CD8-positive, alpha-beta T cell (primary cell): ENCODE measurements at regions of chr4 and their contacts with region 1.

Region 1: DNA sequence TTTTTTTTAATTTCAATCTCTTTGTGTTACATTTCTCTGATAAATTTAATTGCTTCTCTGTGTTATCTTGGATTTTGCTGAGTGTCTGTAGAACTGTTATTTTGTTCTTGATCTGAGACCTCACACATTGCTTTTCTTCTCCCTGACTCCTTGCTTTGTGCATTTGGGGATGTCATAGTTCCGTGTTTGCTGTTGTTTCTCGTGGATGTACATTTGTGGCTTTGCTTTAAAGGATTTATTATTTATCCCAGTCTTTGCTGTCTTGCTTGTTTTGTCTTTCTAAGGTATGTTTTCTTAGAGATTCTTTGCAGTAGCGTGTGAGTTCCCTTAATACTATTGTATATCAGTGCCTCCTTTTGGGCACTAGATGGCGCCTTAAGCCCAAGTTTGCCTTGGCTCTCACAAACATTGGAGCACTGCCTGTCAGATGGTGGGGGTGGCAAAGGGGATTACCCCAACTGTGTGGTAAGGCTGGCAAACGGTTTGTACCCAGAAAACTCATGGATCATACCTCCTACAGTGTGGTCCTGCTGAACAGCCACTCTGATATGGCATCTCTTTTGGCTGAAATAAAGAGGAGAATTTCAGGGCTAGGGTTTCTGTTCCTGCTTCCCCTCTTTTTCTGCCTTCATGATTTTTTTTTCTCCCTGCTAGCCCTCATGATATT is 96.4 kb downstream of the PGRMC2 start:
- DNase-seq: peak; percentile 21 to 85 (median 69)
- ATAC-seq: peak; percentile 100
- H3K4me3 ChIP-seq: no peak overlapping the region
- H3K4me3 Mint-ChIP-seq: no peak overlapping the region
- H3K27ac ChIP-seq: no peak overlapping the region
- H3K27ac Mint-ChIP-seq: no peak overlapping the region
- H3K4me1 ChIP-seq: no peaks in the 10 kb centered on the region
- H3K4me1 Mint-ChIP-seq: peaks cover 3% of the 10 kb centered on the region
- H3K27me3 ChIP-seq: no peaks in the 10 kb centered on the region
- H3K27me3 Mint-ChIP-seq: no peaks in the 10 kb centered on the region
- CTCF ChIP-seq: peak; percentile 96

Region 2: DNA sequence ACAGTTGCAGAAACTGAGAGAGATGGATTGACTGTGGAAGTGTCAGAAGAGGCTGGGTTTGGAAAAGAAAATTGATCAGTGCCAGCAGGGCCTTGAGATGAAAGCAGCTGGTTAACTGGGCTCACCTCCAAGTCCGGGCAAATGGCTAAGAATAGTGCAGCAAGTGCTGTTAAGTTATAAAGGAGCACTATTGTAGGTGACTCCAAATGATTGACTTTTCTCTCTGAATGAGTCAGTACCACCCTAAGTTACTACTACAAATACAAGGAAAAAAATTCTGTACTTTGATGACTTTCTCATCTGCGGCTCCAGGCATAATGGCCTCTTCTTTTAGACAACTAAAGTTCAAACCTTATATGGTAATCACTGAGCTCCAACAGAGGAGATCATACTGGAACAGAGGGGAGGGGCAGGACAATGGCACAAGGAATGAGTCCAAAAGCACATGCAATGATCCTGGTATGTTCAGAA is 1291.9 kb before region 1 on chr4:
- CTCF ChIA-PET with region 1: no interaction called
- POLR2A ChIA-PET with region 1: no interaction called
- intact Hi-C with region 1: no loop called
- DNase-seq: no peak
- ATAC-seq: no peak
- H3K4me3 ChIP-seq: no peak overlapping the region
- H3K4me3 Mint-ChIP-seq: no peak overlapping the region
- H3K27ac ChIP-seq: no peak overlapping the region
- H3K27ac Mint-ChIP-seq: no peak overlapping the region
- H3K4me1 ChIP-seq: no peaks in the 10 kb centered on the region
- H3K4me1 Mint-ChIP-seq: no peaks in the 10 kb centered on the region
- H3K27me3 ChIP-seq: no peaks in the 10 kb centered on the region
- H3K27me3 Mint-ChIP-seq: no peaks in the 10 kb centered on the region
- CTCF ChIP-seq: no peak

Region 3: GRCh38 chr4:127782274-127783025 is 408.8 kb before region 1 on chr4 and contains the start of gene HSPA4L:
- CTCF ChIA-PET with region 1: no interaction called
- POLR2A ChIA-PET with region 1: no interaction called
- intact Hi-C with region 1: no loop called
- DNase-seq: peak in 8 of 9 experiments; percentile 5 to 53 (median 19)
- ATAC-seq: peak; percentile 58
- H3K4me3 ChIP-seq: peak within 1 kb of the TSS; percentile 42 to 66
- H3K4me3 Mint-ChIP-seq: peak within 1 kb of the TSS; percentile 92
- H3K27ac ChIP-seq: no peak within 1 kb of the TSS
- H3K27ac Mint-ChIP-seq: no peak within 1 kb of the TSS
- H3K4me1 ChIP-seq: peaks cover 14% of the 10 kb centered on the region
- H3K4me1 Mint-ChIP-seq: peaks cover 15% of the 10 kb centered on the region
- H3K27me3 ChIP-seq: peaks cover 17 to 25% of the 10 kb centered on the region in 2 experiments
- H3K27me3 Mint-ChIP-seq: peaks cover 60% of the 10 kb centered on the region
- CTCF ChIP-seq: no peak
- total RNA-seq, gene HSPA4L: not detected

Region 4: DNA sequence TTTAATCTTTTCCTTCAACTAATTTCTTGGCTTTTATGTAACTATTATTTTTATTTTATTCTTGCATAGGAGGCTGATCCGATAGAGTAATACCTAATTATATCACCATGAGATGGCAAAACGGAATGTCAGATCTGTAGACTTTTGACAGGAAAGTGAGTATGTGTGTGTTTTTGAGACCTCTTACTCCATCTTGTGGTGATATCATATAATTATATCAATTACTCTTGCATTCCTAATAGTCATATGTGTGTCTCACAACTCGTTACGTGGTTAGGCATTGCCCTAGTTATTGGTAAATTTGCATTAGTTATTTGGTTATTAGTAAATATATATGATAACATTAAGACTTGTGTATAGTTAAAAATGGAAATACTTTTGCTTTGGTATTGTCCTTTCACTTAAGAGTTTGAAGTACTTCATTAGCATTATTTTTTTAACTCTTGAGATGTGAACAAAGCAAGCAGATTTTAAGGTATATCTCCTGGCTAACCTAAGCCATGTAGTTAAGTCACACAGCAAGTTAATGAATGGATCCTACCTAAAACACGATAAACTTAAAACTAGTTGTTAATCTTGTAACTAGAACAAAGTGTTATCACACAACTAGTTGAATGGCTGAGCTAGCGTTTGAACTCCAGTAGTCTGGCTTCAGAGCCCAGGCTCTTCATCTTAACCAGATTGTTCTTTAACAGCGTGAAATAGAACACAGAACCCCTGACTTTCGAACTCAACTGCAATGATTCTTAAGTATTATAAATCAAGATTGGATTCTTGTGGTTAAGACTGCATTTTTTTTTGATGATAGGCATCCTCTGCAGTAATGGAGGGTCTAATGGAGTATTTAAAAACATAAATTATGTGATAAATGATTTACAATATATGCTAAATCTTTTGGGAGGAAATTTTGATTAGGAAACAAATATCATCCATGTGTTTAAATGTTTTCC is 29.3 kb after region 1 on chr4:
- CTCF ChIA-PET with region 1: interaction called, 3 read pairs
- POLR2A ChIA-PET with region 1: no interaction called
- intact Hi-C with region 1: loop called in 1 of 2 experiments (anchors 2 kb)
- DNase-seq: peak in 2 of 9 experiments; percentile 10 to 18
- ATAC-seq: no peak
- H3K4me3 ChIP-seq: no peak overlapping the region
- H3K4me3 Mint-ChIP-seq: no peak overlapping the region
- H3K27ac ChIP-seq: no peak overlapping the region
- H3K27ac Mint-ChIP-seq: no peak overlapping the region
- H3K4me1 ChIP-seq: no peaks in the 10 kb centered on the region
- H3K4me1 Mint-ChIP-seq: no peaks in the 10 kb centered on the region
- H3K27me3 ChIP-seq: no peaks in the 10 kb centered on the region
- H3K27me3 Mint-ChIP-seq: no peaks in the 10 kb centered on the region
- CTCF ChIP-seq: no peak

Region 5: GRCh38 chr4:128298852-128299251 is 107.6 kb after region 1 on chr4:
- CTCF ChIA-PET with region 1: no interaction called
- POLR2A ChIA-PET with region 1: no interaction called
- intact Hi-C with region 1: loop called in 1 of 2 experiments (anchors 5 kb)
- DNase-seq: peak in 2 of 9 experiments; percentile 17 to 40
- ATAC-seq: peak; percentile 78
- H3K4me3 ChIP-seq: no peak overlapping the region
- H3K4me3 Mint-ChIP-seq: no peak overlapping the region
- H3K27ac ChIP-seq: no peak overlapping the region
- H3K27ac Mint-ChIP-seq: no peak overlapping the region
- H3K4me1 ChIP-seq: no peaks in the 10 kb centered on the region
- H3K4me1 Mint-ChIP-seq: no peaks in the 10 kb centered on the region
- H3K27me3 ChIP-seq: no peaks in the 10 kb centered on the region
- H3K27me3 Mint-ChIP-seq: no peaks in the 10 kb centered on the region
- CTCF ChIP-seq: no peak

Region 6: DNA sequence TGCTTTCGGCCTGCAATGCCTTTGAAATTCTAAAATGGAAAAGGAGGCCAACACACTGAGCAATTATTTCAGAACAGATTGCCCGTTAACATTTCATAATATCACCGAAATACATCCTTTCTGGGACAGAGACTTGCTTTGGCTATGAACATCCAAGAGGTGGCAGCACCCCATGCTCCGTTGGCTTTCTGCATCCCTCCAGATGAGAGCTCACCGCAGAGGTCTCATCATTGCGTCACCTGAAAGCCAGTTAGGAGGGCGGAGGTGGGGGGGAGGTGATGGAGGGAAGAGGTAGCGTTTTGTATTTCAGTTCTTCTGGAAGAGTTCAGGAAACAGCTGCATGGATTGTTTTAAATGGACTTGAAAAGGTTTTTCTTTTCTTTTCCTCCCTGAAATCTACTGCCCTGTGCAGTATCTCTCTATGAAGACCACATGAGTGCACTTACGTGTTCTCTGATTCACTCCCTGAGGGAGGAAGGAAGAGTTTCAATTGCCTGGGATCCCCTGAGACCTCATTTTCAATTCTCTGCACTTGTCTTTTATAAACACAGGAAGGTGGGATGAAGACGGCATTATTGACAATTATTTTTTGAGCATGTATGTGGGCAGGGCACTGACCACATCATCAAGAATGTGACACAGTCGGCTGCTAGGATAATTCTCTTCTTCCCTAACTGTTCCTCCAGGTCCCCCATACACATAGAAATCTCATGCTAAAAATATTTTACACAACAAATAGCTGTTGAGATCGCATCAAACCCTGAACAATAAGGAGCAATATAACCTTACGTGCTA is 263.2 kb after region 1 on chr4:
- CTCF ChIA-PET with region 1: no interaction called
- POLR2A ChIA-PET with region 1: no interaction called
- intact Hi-C with region 1: loop called in 1 of 2 experiments (anchors 5 kb)
- DNase-seq: peak; percentile 21 to 80 (median 65)
- ATAC-seq: peak; percentile 100
- H3K4me3 ChIP-seq: no peak overlapping the region
- H3K4me3 Mint-ChIP-seq: no peak overlapping the region
- H3K27ac ChIP-seq: no peak overlapping the region
- H3K27ac Mint-ChIP-seq: no peak overlapping the region
- H3K4me1 ChIP-seq: no peaks in the 10 kb centered on the region
- H3K4me1 Mint-ChIP-seq: peaks cover 7% of the 10 kb centered on the region
- H3K27me3 ChIP-seq: no peaks in the 10 kb centered on the region
- H3K27me3 Mint-ChIP-seq: peaks cover 7% of the 10 kb centered on the region
- CTCF ChIP-seq: peak; percentile 65

Region 7: GRCh38 chr4:128574706-128575105 is 383.5 kb after region 1 on chr4:
- CTCF ChIA-PET with region 1: interaction called, 3 read pairs
- POLR2A ChIA-PET with region 1: no interaction called
- intact Hi-C with region 1: loop called (anchors 10 kb)
- DNase-seq: peak; percentile 1 to 69 (median 58)
- ATAC-seq: no peak
- H3K4me3 ChIP-seq: no peak overlapping the region
- H3K4me3 Mint-ChIP-seq: no peak overlapping the region
- H3K27ac ChIP-seq: no peak overlapping the region
- H3K27ac Mint-ChIP-seq: no peak overlapping the region
- H3K4me1 ChIP-seq: no peaks in the 10 kb centered on the region
- H3K4me1 Mint-ChIP-seq: no peaks in the 10 kb centered on the region
- H3K27me3 ChIP-seq: no peaks in the 10 kb centered on the region
- H3K27me3 Mint-ChIP-seq: peaks cover 7% of the 10 kb centered on the region
- CTCF ChIP-seq: peak; percentile 21

Region 8: GRCh38 chr4:129641179-129641578 is 1449.9 kb after region 1 on chr4:
- CTCF ChIA-PET with region 1: interaction called, 3 read pairs
- POLR2A ChIA-PET with region 1: no interaction called
- intact Hi-C with region 1: loop called in 1 of 2 experiments (anchors 2 kb)
- DNase-seq: peak in 7 of 9 experiments; percentile 7 to 40 (median 31)
- ATAC-seq: no peak
- H3K4me3 ChIP-seq: no peak overlapping the region
- H3K4me3 Mint-ChIP-seq: no peak overlapping the region
- H3K27ac ChIP-seq: no peak overlapping the region
- H3K27ac Mint-ChIP-seq: no peak overlapping the region
- H3K4me1 ChIP-seq: no peaks in the 10 kb centered on the region
- H3K4me1 Mint-ChIP-seq: no peaks in the 10 kb centered on the region
- H3K27me3 ChIP-seq: no peaks in the 10 kb centered on the region
- H3K27me3 Mint-ChIP-seq: no peaks in the 10 kb centered on the region
- CTCF ChIP-seq: peak; percentile 57